Adrenal gland (tissue), 19 donors: ENCODE measurements at regions of chr10 and their contacts with region 1.

Region 1: GRCh38 chr10:42552493-42553407 is 85.6 kb downstream of the ZNF33B start:
- DNase-seq: peak; percentile 96 to 99 (median 97)
- H3K4me3 ChIP-seq: peak overlapping the region; percentile 44 to 76 (median 67)
- H3K27ac ChIP-seq: peak overlapping the region in 4 of 5 donors; percentile 7 to 77 (median 51)
- H3K4me1 ChIP-seq: peaks cover 6 to 16% of the 10 kb centered on the region in 2 donors
- H3K27me3 ChIP-seq: no peaks in the 10 kb centered on the region
- CTCF ChIP-seq: no peak
- POLR2A ChIP-seq: peak in 1 of 2 donors; percentile 68

Region 2: DNA sequence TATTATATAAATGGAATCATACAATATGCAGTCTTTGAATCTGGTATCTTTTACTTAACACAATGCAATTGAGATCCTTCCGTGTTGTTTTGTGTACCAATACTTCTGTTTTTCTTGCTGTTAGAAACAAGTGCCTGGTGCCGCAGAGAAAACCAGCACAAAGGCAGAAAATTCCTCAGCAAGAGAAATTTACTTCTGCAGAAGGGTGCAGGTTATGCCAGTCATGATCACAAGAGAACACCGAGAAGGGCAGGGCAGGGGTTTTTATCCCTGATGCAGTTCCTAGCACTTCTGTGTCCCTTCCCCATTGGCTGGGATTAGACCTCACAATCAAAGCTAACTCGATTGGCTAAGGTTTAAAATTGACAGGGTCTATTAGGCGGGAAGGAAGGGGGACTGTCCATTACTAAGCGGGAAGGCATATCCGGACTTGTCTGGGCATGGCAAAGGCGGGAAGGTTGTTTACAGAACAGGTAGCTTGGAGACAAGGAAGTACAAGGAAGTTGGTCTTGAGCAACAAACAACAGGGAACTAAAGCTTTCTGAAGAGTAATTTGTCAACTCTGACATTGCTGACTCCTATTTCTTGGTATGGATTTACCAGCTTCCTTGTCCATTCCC is 88.0 kb after region 1 on chr10:
- intact Hi-C with region 1: loop called in 1 of 2 experiments (anchors 5 kb)
- DNase-seq: no peak
- H3K4me3 ChIP-seq: no peak overlapping the region
- H3K27ac ChIP-seq: no peak overlapping the region
- H3K4me1 ChIP-seq: peaks cover 5 to 10% of the 10 kb centered on the region in 2 donors
- H3K27me3 ChIP-seq: no peaks in the 10 kb centered on the region
- CTCF ChIP-seq: no peak
- POLR2A ChIP-seq: no peak

Region 3: GRCh38 chr10:42782446-42783180 is 229.9 kb after region 1 on chr10 and contains the start of gene BMS1:
- intact Hi-C with region 1: loop called in 1 of 2 experiments (anchors 10 kb)
- DNase-seq: peak; percentile 89 to 95 (median 93)
- H3K4me3 ChIP-seq: peak within 1 kb of the TSS in 3 of 4 donors; percentile 72 to 88 (median 85)
- H3K27ac ChIP-seq: peak within 1 kb of the TSS; percentile 87 to 97 (median 90)
- H3K4me1 ChIP-seq: peaks cover 5 to 11% of the 10 kb centered on the region in 2 donors
- H3K27me3 ChIP-seq: no peaks in the 10 kb centered on the region
- CTCF ChIP-seq: peak in 1 of 6 experiments; percentile 13
- POLR2A ChIP-seq: peak; percentile 70 to 72
- total RNA-seq, gene BMS1: 9.1 to 25.0 (median 12.8) TPM

Region 4: GRCh38 chr10:43867667-43868565 is 1315.2 kb after region 1 on chr10:
- intact Hi-C with region 1: no loop called
- DNase-seq: no peak
- H3K4me3 ChIP-seq: no peak overlapping the region
- H3K27ac ChIP-seq: no peak overlapping the region
- H3K4me1 ChIP-seq: no peaks in the 10 kb centered on the region
- H3K27me3 ChIP-seq: no peaks in the 10 kb centered on the region
- CTCF ChIP-seq: no peak
- POLR2A ChIP-seq: no peak